ENCODE measurements at regions of chr6 and their contacts with region 1.

Region 1: GRCh38 chr6:52020945-52021570 is 66.4 kb downstream of the PKHD1 start:
- DNase-seq: peak; percentile 45
- H3K4me3 Mint-ChIP-seq: no peak overlapping the region
- H3K27ac Mint-ChIP-seq: no peak overlapping the region
- H3K4me1 Mint-ChIP-seq: no peaks in the 10 kb centered on the region
- H3K27me3 Mint-ChIP-seq: peaks cover 20% of the 10 kb centered on the region
- CTCF ChIP-seq: peak; percentile 53

Region 2: GRCh38 chr6:51608932-51609331 is 412.1 kb before region 1 on chr6:
- CTCF ChIA-PET with region 1: no interaction called
- POLR2A ChIA-PET with region 1: no interaction called
- intact Hi-C with region 1: no loop called
- DNase-seq: no peak
- H3K4me3 Mint-ChIP-seq: no peak overlapping the region
- H3K27ac Mint-ChIP-seq: no peak overlapping the region
- H3K4me1 Mint-ChIP-seq: no peaks in the 10 kb centered on the region
- H3K27me3 Mint-ChIP-seq: no peaks in the 10 kb centered on the region
- CTCF ChIP-seq: no peak

Region 3: DNA sequence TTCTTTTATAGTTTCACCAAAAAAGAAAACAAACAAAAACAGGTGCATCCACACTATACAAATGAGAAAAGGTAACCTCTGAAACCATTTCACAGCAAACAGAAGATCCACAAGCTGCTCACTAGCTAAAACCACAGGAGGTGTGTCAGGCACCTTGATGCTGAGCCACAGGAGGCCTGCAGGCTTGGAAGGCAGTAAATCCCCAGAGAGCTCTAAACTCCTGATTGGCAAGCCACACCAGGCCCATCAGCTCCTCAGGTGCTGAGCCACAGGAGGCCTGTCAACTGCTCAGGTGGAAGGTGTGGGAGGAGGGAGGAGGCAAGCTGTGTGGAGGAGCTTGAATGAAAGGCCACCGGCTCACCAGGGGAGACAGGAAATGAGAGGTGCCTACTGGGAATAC is 206.6 kb before region 1 on chr6:
- CTCF ChIA-PET with region 1: no interaction called
- POLR2A ChIA-PET with region 1: no interaction called
- intact Hi-C with region 1: no loop called
- DNase-seq: no peak
- H3K4me3 Mint-ChIP-seq: no peak overlapping the region
- H3K27ac Mint-ChIP-seq: no peak overlapping the region
- H3K4me1 Mint-ChIP-seq: no peaks in the 10 kb centered on the region
- H3K27me3 Mint-ChIP-seq: no peaks in the 10 kb centered on the region
- CTCF ChIP-seq: no peak

Region 4: DNA sequence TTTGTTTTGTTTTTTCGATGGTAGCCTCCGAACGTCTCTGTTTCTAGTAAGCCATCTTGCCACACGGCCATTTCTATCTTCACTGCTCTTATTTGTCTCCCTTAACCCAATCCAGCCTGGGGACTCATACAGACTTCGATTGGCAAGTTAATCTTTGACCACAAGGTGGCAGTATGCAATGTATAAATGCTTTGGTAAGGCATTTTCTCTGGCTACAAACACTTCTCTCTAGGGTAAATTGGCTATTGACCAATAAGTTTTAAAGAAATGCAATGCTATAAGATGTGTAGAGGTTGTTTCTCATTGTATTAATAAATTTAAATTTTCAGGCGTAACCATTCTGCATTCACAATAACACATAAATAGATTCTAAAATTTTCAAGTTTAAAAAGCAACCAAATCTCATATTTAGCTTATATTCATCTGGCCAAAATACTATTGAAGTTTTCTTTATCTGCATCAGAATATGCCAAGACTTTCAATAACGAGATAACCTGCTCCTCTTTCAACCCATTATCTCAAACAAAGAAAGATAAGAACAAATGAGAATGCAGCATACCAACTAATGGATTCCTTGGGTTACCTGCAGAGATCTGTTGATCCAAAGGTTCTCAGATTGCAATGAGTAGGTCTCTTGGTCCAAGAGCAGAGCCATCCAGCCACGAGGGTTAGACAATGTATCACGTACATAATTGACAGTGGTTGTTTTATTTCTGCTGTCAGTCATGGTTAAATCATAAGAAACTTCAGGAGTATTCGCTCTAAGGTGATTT is 165.6 kb before region 1 on chr6:
- CTCF ChIA-PET with region 1: interaction called, 33 read pairs
- POLR2A ChIA-PET with region 1: no interaction called
- intact Hi-C with region 1: loop called (anchors 1 kb)
- DNase-seq: peak; percentile 78
- H3K4me3 Mint-ChIP-seq: no peak overlapping the region
- H3K27ac Mint-ChIP-seq: no peak overlapping the region
- H3K4me1 Mint-ChIP-seq: peaks cover 6% of the 10 kb centered on the region
- H3K27me3 Mint-ChIP-seq: no peaks in the 10 kb centered on the region
- CTCF ChIP-seq: peak; percentile 58

Region 5: GRCh38 chr6:52325695-52326441 is 304.8 kb after region 1 on chr6:
- CTCF ChIA-PET with region 1: no interaction called
- POLR2A ChIA-PET with region 1: no interaction called
- intact Hi-C with region 1: no loop called
- DNase-seq: no peak
- H3K4me3 Mint-ChIP-seq: no peak overlapping the region
- H3K27ac Mint-ChIP-seq: no peak overlapping the region
- H3K4me1 Mint-ChIP-seq: peaks cover 5% of the 10 kb centered on the region
- H3K27me3 Mint-ChIP-seq: no peaks in the 10 kb centered on the region
- CTCF ChIP-seq: no peak

Measured in MCF 10A (cell line).